Activated T-helper 2 cell treated with anti-CD3 and anti-CD28 coated beads, Interferon-gamma antibody, Interleukin-2, Interleukin-4, amounts not matched to agents 10 μg/mL and 5 μg/mL and 100 μg/mL, durations not matched to agents 14 hours and 24 hours and 36 hours (primary cell): ENCODE measurements at regions of chr12 and their contacts with region 1.

Region 1: DNA sequence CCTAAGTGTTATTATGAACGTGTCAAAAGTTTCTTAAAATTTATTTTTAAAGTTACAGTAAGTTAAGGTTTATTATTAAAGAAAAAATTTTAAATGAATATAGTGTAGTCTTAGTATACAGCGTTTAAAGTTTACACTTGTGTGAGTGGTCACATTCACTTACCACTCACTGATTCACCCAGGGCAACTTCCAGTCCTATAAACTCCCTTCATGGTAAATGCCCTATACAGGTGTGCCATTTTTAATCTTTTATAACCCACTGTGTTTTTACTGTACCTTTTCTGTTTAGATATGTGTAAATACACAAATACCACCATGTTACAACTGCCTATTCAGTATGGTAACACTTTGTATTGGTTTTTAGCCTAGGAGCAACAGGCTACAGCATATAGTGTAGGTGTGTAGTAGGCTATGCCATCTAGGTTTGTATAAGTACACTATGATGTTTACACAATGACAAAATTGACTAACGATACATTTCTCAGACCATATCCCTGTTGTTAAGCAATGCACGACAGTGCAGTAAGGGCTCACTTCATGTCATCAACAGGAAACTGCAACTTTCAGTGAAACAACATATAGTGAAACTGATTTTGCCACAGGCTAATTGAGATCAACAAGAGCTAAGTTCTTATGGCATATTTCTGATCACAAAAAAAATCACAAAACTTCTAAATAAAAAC is 112.0 kb upstream of the TMCC3 start:
- DNase-seq: no peak
- H3K4me3 Mint-ChIP-seq: no peak overlapping the region
- H3K27ac Mint-ChIP-seq: no peak overlapping the region
- H3K4me1 Mint-ChIP-seq: peaks cover 15% of the 10 kb centered on the region
- H3K27me3 Mint-ChIP-seq: peaks cover 7% of the 10 kb centered on the region

Region 2: DNA sequence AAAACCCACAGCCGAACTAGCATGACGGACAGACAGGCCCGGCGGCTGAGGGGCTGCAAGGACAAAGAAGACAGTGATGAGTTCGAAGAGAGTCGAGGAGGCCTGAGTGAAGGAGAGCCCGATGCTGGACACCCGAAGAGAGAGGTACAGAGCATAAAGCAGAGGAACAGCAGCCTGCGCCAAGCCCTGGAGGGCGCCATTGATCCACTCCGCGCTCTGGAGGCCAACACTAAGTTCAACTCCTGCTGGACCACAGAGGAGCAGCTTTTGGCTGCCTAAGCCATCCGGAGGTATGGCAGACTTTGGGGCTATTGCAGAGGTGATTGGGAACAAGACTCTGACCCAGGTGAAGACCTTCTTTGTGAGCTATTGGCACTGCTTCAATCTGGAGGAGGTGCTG is 621.8 kb before region 1 on chr12:
- intact Hi-C with region 1: loop called (anchors 5 kb)
- DNase-seq: peak; percentile 35
- H3K4me3 Mint-ChIP-seq: no peak overlapping the region
- H3K27ac Mint-ChIP-seq: no peak overlapping the region
- H3K4me1 Mint-ChIP-seq: peaks cover 9% of the 10 kb centered on the region
- H3K27me3 Mint-ChIP-seq: peaks cover 19% of the 10 kb centered on the region

Region 3: GRCh38 chr12:94603434-94604365 is 158.7 kb before region 1 on chr12:
- intact Hi-C with region 1: loop called (anchors 1 kb)
- DNase-seq: peak; percentile 24
- H3K4me3 Mint-ChIP-seq: no peak overlapping the region
- H3K27ac Mint-ChIP-seq: no peak overlapping the region
- H3K4me1 Mint-ChIP-seq: no peaks in the 10 kb centered on the region
- H3K27me3 Mint-ChIP-seq: peaks cover 39% of the 10 kb centered on the region

Region 4: GRCh38 chr12:94621664-94622359 is 140.6 kb before region 1 on chr12:
- intact Hi-C with region 1: loop called (anchors 1 kb)
- DNase-seq: peak; percentile 37
- H3K4me3 Mint-ChIP-seq: peak overlapping the region; percentile 9
- H3K27ac Mint-ChIP-seq: peak overlapping the region; percentile 6
- H3K4me1 Mint-ChIP-seq: peaks cover 16% of the 10 kb centered on the region
- H3K27me3 Mint-ChIP-seq: no peaks in the 10 kb centered on the region

Region 5: DNA sequence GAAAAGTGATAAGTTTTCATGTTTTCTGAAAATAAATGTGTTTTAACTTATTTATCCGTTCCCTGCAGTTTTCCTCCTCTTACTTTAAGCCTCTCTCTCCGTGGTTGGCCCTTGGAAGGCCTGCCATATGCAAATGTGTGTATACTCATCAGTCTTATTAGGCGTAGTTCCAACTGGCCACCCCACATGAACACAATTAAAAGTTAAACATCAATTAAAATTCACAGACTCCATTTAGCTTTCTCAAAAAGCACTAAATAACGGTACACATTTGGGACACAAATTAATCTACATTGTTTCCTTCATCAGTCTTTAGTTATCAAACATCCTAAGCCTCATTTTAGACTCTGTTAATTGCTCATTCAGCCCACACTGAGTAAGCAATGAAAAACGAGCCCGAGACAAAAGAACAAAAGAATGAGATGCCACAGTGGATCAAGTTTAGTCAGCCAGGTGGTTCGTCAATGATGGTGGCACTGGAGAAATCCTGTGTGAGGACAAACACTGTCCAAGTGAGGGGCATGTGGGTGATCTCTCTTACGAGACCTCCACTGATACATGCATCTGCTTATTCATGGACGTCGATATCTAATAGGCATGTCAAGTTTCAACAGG is 36.1 kb before region 1 on chr12:
- intact Hi-C with region 1: no loop called
- DNase-seq: no peak
- H3K4me3 Mint-ChIP-seq: no peak overlapping the region
- H3K27ac Mint-ChIP-seq: no peak overlapping the region
- H3K4me1 Mint-ChIP-seq: no peaks in the 10 kb centered on the region
- H3K27me3 Mint-ChIP-seq: peaks cover 2% of the 10 kb centered on the region

Region 6: GRCh38 chr12:94740601-94741362 is 21.6 kb before region 1 on chr12:
- intact Hi-C with region 1: no loop called
- DNase-seq: no peak
- H3K4me3 Mint-ChIP-seq: no peak overlapping the region
- H3K27ac Mint-ChIP-seq: no peak overlapping the region
- H3K4me1 Mint-ChIP-seq: no peaks in the 10 kb centered on the region
- H3K27me3 Mint-ChIP-seq: peaks cover 12% of the 10 kb centered on the region

Region 7: DNA sequence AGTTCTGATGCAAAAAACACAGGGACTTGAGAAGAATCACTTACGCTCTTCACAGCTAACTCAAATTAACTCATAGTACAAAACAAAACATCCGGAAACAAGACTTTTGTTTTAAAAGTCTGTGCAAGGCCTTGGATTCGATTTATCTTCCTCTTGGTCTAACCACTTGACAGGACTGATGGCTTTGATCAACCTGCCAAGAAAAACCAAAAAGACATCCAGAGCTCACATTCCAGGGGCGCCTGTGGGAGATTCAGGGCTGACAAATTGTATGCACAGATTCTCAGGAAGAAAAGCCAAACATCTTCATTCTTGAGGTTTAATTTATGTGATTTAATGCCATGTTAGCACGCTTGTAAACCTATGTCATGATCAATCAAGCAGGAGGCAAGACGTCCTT is 17.1 kb after region 1 on chr12:
- intact Hi-C with region 1: no loop called
- DNase-seq: no peak
- H3K4me3 Mint-ChIP-seq: no peak overlapping the region
- H3K27ac Mint-ChIP-seq: no peak overlapping the region
- H3K4me1 Mint-ChIP-seq: no peaks in the 10 kb centered on the region
- H3K27me3 Mint-ChIP-seq: peaks cover 17% of the 10 kb centered on the region